CD4-positive, alpha-beta T cell (primary cell): ENCODE measurements at regions of chr10 and their contacts with region 1.

Region 1: GRCh38 chr10:14093730-14094484 is 236.8 kb downstream of the FRMD4A start:
- DNase-seq: peak in 4 of 14 experiments; percentile 8 to 25 (median 16)
- ATAC-seq: no peak
- H3K4me3 ChIP-seq: no peak overlapping the region
- H3K4me3 Mint-ChIP-seq: no peak overlapping the region
- H3K27ac ChIP-seq: no peak overlapping the region
- H3K27ac Mint-ChIP-seq: no peak overlapping the region
- H3K4me1 ChIP-seq: no peaks in the 10 kb centered on the region
- H3K4me1 Mint-ChIP-seq: peaks cover 5% of the 10 kb centered on the region
- H3K27me3 ChIP-seq: no peaks in the 10 kb centered on the region
- H3K27me3 Mint-ChIP-seq: no peaks in the 10 kb centered on the region
- CTCF ChIP-seq: peak; percentile 9

Region 2: DNA sequence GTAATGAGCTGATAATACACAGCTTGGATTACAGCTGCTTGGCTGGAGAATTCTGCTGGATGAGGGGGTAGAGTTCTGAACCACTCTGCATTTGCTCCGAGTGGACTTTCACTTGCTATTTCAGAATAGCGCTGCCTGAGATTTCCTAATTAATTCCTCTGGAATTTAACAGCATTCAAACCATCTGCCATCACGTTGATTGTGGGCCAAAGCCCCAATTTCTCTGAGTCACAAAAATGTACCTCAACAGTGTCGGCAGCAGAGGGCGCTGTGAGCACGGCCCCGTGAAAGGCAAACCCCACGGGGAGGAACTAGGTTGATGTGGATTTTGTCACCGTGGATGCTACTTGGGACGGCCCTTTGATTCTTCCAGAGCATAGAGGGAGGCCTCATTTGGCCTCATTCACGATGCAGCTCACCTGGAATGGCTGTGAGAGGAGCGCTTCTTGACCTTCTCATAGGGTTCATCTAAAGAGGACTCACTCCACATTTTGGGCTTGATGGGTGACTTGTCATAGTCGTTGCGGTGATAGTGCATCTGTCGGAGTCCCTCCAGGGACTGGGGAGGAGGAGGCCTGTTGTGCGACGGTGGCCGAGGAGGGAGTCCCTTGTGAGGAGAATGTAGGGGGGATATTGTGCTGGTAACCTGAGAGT is 433.9 kb before region 1 on chr10:
- CTCF ChIA-PET with region 1: no interaction called
- POLR2A ChIA-PET with region 1: no interaction called
- intact Hi-C with region 1: loop called (anchors 2 to 10 kb)
- DNase-seq: peak; percentile 52 to 81 (median 65)
- ATAC-seq: peak; percentile 82
- H3K4me3 ChIP-seq: no peak overlapping the region
- H3K4me3 Mint-ChIP-seq: no peak overlapping the region
- H3K27ac ChIP-seq: no peak overlapping the region
- H3K27ac Mint-ChIP-seq: no peak overlapping the region
- H3K4me1 ChIP-seq: peaks cover 23% of the 10 kb centered on the region
- H3K4me1 Mint-ChIP-seq: peaks cover 11% of the 10 kb centered on the region
- H3K27me3 ChIP-seq: no peaks in the 10 kb centered on the region
- H3K27me3 Mint-ChIP-seq: no peaks in the 10 kb centered on the region
- CTCF ChIP-seq: peak; percentile 89

Region 3: DNA sequence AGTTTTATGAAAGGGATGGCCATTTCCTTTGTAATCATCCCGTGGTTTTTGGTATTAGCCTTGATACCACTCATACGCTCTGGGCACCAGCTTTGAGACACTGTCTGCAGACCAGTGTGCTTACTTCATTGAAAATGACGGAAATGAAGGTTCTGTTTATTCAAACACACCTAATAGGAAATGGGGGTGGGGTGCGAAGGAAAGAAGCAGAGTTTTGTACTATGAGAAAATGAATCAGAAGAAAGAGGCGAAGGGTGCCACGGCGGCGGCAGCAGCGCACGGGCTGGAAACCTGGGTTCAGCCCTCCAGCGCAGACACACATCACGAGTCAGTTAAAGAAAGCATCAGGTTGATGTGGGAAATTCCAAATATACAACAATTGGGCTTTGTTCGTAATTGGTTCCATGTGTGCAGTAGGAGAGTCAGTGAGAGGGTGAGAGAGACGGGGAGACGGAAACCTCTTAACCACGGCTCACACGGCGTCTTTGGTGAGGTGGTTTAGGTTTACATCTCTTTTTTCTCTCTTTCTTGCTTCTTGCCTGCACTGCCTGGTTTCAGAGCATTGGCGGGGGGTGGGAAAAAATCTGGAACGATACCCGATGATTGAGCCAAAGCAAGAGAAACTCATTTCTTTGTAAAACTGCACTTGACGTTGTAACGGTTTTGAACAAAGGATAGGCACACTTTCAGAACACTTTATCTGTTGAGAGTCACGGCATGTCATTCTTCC is 84.4 kb before region 1 on chr10:
- CTCF ChIA-PET with region 1: no interaction called
- POLR2A ChIA-PET with region 1: no interaction called
- intact Hi-C with region 1: no loop called
- DNase-seq: peak; percentile 33 to 92 (median 66)
- ATAC-seq: peak; percentile 85
- H3K4me3 ChIP-seq: peak overlapping the region; percentile 52
- H3K4me3 Mint-ChIP-seq: peak overlapping the region; percentile 74
- H3K27ac ChIP-seq: peak overlapping the region; percentile 53 to 64
- H3K27ac Mint-ChIP-seq: peak overlapping the region; percentile 88
- H3K4me1 ChIP-seq: peaks cover 32% of the 10 kb centered on the region
- H3K4me1 Mint-ChIP-seq: peaks cover 62% of the 10 kb centered on the region
- H3K27me3 ChIP-seq: no peaks in the 10 kb centered on the region
- H3K27me3 Mint-ChIP-seq: no peaks in the 10 kb centered on the region
- CTCF ChIP-seq: no peak